Tibial artery (tissue), 4 donors: ENCODE measurements at regions of chr12 and their contacts with region 1.

Region 1: DNA sequence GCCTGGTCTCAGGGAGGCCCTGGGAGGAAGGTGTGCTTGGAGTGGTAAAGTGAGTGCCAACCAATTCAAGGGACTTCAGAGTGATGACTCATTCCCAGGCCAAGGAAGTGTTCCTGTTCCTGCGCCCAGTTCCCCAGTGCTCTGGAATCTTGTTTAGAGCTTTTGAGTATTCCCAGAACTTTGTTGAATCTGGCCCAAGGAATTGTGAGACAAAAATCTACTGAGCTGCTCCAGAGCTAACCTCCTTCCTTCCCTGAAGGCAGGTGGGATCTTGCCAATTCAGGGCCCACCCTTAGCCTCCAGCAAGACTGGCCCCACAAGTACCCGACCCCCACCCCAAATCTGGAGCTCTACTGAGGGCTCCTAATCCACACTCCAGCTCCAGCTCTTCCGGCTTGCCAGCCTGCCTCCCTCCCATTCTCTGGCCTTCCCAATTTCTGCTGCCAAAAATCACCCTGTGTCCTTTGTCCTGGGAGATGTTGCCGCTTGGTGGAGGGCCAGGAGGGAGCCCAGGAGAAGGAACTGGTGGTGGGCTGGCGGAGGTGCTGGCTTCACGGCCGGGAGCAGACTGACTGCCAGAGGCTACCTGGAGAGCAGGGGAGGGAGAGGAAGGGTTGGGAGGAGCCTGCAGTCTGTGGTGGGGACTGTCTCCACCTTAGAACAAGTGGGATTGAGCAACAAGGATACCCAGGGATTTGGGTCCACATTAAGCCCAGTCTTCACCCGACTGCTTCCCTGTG is 2.0 kb upstream of the ATN1 start:
- DNase-seq: peak; percentile 86 to 92
- H3K4me3 ChIP-seq: peak overlapping the region; percentile 97 to 99
- H3K27ac ChIP-seq: peak overlapping the region; percentile 99
- H3K4me1 ChIP-seq: peaks cover 7 to 54% (median 41%) of the 10 kb centered on the region in 4 donors
- H3K27me3 ChIP-seq: no peaks in the 10 kb centered on the region
- CTCF ChIP-seq: peak in 1 of 2 experiments; percentile 17

Region 2: DNA sequence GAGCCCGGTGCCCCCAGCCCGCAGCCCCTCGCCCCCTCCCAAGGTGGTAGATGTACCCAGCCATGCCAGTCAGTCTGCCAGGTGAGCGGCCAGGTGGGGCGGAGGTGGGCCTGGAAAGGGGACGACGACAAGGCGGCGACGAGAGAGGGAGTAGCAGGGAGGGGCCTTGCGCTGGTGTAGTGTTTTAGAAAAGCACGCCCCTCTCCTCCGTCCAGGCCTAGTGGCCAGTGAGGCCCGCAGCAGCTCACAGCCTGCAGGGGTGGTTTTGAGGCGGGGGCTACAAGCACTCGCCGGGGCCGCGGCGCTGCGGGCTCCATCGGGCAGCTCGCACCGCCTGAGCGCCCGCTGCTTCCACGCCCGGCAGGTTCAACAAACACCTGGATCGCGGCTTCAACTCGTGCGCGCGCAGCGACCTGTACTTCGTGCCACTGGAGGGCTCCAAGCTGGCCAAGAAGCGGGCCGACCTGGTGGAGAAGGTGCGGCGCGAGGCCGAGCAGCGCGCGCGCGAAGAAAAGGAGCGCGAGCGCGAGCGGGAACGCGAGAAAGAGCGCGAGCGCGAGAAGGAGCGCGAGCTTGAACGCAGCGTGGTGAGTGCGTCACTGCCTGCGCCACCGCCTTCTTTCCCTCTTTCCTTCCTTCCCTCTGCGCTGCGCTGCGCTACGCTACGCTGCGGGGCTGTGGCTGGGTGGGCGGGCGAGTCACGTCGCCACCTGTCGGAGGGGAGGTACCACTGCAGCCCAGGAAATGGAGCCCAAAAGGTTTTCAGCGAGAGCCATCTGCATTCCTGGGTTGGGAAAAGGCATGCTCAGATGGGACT is 12.0 kb after region 1 on chr12:
- intact Hi-C with region 1: loop called (anchors 2 kb)
- DNase-seq: peak; percentile 90 to 96
- H3K4me3 ChIP-seq: peak overlapping the region; percentile 61 to 72
- H3K27ac ChIP-seq: peak overlapping the region; percentile 91 to 99
- H3K4me1 ChIP-seq: peaks cover 0 to 74% (median 47%) of the 10 kb centered on the region in 4 donors
- H3K27me3 ChIP-seq: no peaks in the 10 kb centered on the region
- CTCF ChIP-seq: peak; percentile 97 to 98

Region 3: GRCh38 chr12:7310070-7310469 is 384.4 kb after region 1 on chr12:
- intact Hi-C with region 1: no loop called
- DNase-seq: no peak
- H3K4me3 ChIP-seq: no peak overlapping the region
- H3K27ac ChIP-seq: no peak overlapping the region
- H3K4me1 ChIP-seq: no peaks in the 10 kb centered on the region
- H3K27me3 ChIP-seq: no peaks in the 10 kb centered on the region
- CTCF ChIP-seq: no peak